CD8-positive, alpha-beta T cell (primary cell): ENCODE measurements at regions of chr12 and their contacts with region 1.

Region 1: GRCh38 chr12:1698638-1699214 is 7.9 kb downstream of the ADIPOR2 start:
- DNase-seq: no peak
- ATAC-seq: no peak
- H3K4me3 ChIP-seq: no peak overlapping the region
- H3K4me3 Mint-ChIP-seq: no peak overlapping the region
- H3K27ac ChIP-seq: no peak overlapping the region
- H3K27ac Mint-ChIP-seq: no peak overlapping the region
- H3K4me1 ChIP-seq: peaks cover 16% of the 10 kb centered on the region
- H3K4me1 Mint-ChIP-seq: peaks cover 68% of the 10 kb centered on the region
- H3K27me3 ChIP-seq: no peaks in the 10 kb centered on the region
- H3K27me3 Mint-ChIP-seq: no peaks in the 10 kb centered on the region
- CTCF ChIP-seq: no peak

Region 2: GRCh38 chr12:1720494-1720893 is 21.8 kb after region 1 on chr12:
- CTCF ChIA-PET with region 1: no interaction called
- POLR2A ChIA-PET with region 1: no interaction called
- intact Hi-C with region 1: no loop called
- DNase-seq: no peak
- ATAC-seq: no peak
- H3K4me3 ChIP-seq: no peak overlapping the region
- H3K4me3 Mint-ChIP-seq: no peak overlapping the region
- H3K27ac ChIP-seq: no peak overlapping the region
- H3K27ac Mint-ChIP-seq: no peak overlapping the region
- H3K4me1 ChIP-seq: no peaks in the 10 kb centered on the region
- H3K4me1 Mint-ChIP-seq: peaks cover 50% of the 10 kb centered on the region
- H3K27me3 ChIP-seq: no peaks in the 10 kb centered on the region
- H3K27me3 Mint-ChIP-seq: no peaks in the 10 kb centered on the region
- CTCF ChIP-seq: no peak

Region 3: DNA sequence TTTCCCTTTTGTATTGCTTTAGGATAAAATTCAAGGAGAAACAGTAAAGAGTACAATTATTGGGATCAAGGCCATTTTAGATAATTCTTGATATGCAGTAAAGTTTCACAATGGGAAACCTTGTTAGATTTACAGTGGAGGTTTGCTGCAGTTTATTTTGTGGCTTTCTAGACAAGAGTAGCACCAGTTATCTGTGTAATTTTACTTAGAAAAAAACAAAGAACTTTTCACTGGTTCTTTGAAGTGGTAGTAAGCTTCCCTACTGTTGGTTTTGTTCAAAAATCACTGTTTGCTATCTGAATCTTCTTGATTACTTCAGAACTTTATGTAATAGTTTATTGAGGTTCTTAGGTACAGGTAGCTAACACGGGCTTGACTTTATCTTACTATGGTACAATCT is 34.2 kb after region 1 on chr12:
- CTCF ChIA-PET with region 1: no interaction called
- POLR2A ChIA-PET with region 1: interaction called, 6 read pairs
- intact Hi-C with region 1: loop called in 1 of 2 experiments (anchors 5 kb)
- DNase-seq: no peak
- ATAC-seq: peak; percentile 38
- H3K4me3 ChIP-seq: no peak overlapping the region
- H3K4me3 Mint-ChIP-seq: no peak overlapping the region
- H3K27ac ChIP-seq: no peak overlapping the region
- H3K27ac Mint-ChIP-seq: no peak overlapping the region
- H3K4me1 ChIP-seq: peaks cover 6% of the 10 kb centered on the region
- H3K4me1 Mint-ChIP-seq: peaks cover 43% of the 10 kb centered on the region
- H3K27me3 ChIP-seq: no peaks in the 10 kb centered on the region
- H3K27me3 Mint-ChIP-seq: no peaks in the 10 kb centered on the region
- CTCF ChIP-seq: no peak

Region 4: DNA sequence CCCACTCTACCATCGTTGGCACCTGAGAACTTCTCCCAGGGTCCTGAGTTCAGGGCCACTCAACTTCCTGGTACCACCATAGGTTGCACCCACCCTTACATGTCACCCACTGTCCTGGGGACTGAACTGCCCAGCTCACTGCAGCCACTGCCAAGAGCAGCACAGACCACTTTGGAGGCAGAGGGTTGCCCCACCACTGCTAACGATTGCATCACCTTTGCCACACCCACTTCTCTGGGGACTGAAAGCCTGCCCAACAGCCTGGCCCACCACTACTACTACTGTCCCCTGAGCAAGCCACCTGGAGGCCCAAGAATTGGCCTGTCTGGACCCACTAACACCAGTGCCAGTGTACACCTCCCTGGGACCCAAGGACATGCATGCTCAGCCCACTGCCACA is 192.1 kb after region 1 on chr12:
- CTCF ChIA-PET with region 1: no interaction called
- POLR2A ChIA-PET with region 1: no interaction called
- intact Hi-C with region 1: no loop called
- DNase-seq: no peak
- ATAC-seq: no peak
- H3K4me3 ChIP-seq: no peak overlapping the region
- H3K4me3 Mint-ChIP-seq: no peak overlapping the region
- H3K27ac ChIP-seq: no peak overlapping the region
- H3K27ac Mint-ChIP-seq: no peak overlapping the region
- H3K4me1 ChIP-seq: no peaks in the 10 kb centered on the region
- H3K4me1 Mint-ChIP-seq: no peaks in the 10 kb centered on the region
- H3K27me3 ChIP-seq: no peaks in the 10 kb centered on the region
- H3K27me3 Mint-ChIP-seq: peaks cover 30% of the 10 kb centered on the region
- CTCF ChIP-seq: no peak

Region 5: DNA sequence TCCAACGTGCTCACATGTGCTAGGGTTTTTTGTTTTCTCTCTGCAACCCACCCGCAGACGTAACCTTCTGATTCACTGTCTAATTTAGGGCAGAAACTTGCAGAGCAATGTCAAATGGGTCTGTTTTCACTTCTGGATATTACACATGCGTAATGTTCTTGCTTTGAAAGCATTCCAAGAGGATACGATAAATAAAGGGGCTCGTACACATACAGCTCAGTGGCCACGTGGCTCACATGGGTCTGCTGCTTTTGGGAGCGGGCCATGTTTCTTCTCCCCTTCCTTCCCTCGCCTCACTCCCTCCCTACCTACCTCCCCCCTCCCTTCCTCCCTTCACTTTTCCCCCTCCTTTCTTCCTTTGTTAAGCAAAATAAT is 377.5 kb after region 1 on chr12:
- CTCF ChIA-PET with region 1: no interaction called
- POLR2A ChIA-PET with region 1: no interaction called
- intact Hi-C with region 1: no loop called
- DNase-seq: no peak
- ATAC-seq: no peak
- H3K4me3 ChIP-seq: no peak overlapping the region
- H3K4me3 Mint-ChIP-seq: no peak overlapping the region
- H3K27ac ChIP-seq: no peak overlapping the region
- H3K27ac Mint-ChIP-seq: no peak overlapping the region
- H3K4me1 ChIP-seq: no peaks in the 10 kb centered on the region
- H3K4me1 Mint-ChIP-seq: no peaks in the 10 kb centered on the region
- H3K27me3 ChIP-seq: no peaks in the 10 kb centered on the region
- H3K27me3 Mint-ChIP-seq: peaks cover 17% of the 10 kb centered on the region
- CTCF ChIP-seq: no peak